RWPE1 (cell line): ENCODE measurements at regions of chr17 and their contacts with region 1.

Region 1: GRCh38 chr17:45293413-45294211 is 23.2 kb downstream of the MAP3K14 start:
- DNase-seq: peak; percentile 76
- H3K27ac ChIP-seq: peak overlapping the region; percentile 93
- CTCF ChIP-seq: no peak

Region 2: DNA sequence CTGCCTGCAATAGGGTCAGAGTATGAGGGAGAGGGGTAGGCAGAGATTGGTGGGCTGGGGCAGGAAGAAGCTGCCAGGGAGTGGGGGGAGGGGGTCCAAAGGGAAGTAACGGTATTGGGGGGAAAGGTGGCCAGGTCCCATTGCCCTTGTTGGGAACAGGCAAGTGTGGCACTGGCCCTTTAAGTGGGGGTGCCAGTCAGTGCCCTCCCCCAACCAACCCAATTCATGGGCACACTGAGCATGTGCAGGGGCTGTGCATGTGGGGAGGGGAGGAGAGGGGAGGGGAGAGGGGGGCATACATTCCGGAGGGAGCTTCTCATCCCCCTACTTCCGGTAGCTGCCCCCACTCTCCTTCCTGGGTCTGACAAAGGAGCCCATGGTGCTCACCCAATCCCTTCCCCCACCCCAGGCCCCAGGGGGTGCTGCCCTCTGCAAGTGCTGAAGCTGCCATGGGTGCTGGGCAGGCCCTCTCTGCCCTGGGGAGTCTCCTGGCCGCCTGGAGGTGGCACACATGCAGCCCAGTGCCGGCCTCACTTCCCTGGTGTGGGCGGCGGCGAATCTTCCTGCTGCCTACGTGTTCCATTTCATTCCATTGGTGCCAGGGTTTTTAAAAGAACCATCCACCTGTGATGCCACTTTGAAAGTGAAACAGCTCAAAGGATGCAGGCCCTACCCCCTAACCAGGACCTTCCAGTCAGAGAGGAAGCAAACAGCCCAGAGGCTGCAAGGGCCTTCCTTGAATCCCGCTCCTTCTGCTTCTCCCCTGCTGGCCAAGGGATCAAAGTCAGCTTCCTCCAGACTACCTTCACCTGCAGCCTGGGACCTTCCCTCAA is 120.9 kb before region 1 on chr17:
- CTCF ChIA-PET with region 1: no interaction called
- POLR2A ChIA-PET with region 1: no interaction called
- DNase-seq: peak; percentile 89
- H3K27ac ChIP-seq: peak overlapping the region; percentile 100
- CTCF ChIP-seq: no peak

Region 3: DNA sequence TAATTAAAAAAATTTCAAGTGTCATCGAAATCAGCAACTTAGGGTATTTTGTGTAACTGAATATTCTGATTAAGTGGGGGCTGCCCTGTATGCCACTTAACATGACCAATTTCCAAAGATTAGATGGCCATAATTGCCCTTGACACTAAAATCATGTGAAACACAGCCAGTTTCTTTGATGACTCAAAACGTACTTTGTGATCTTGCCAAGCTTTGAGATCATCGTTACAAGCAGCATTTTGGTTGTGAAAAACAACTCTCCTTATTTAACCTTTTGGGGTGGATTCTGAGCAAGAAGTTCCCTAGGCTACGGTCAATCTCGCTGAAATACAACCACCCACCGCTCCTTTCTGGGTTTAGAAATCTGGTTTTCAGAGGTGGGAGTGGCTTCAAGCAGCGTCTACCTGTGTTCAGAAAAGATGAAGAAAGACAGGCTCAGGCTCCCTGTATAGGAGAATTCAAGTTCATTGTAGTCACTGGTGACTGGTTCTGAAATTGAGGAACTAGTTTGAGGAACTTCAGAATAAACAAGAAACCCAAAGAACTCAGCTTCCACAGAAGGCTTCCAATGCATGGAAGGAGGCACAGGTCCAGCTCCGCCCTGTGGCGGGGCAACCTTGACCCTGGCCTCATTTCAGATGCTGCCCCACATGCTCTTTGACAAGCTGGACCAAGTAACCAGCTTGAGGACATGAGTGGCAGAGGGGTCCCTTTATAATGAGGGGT is 13.8 kb after region 1 on chr17:
- CTCF ChIA-PET with region 1: interaction called, 10 read pairs
- POLR2A ChIA-PET with region 1: interaction called, 3 read pairs
- DNase-seq: peak; percentile 68
- H3K27ac ChIP-seq: peak overlapping the region; percentile 95
- CTCF ChIP-seq: no peak